Posterior cingulate gyrus (tissue), 11 donors: ENCODE measurements at regions of chr14 and their contacts with region 1.

Region 1: GRCh38 chr14:36941783-36942521 is 230.5 kb downstream of the SLC25A21 start:
- DNase-seq: peak; percentile 41 to 95 (median 76)

Region 2: DNA sequence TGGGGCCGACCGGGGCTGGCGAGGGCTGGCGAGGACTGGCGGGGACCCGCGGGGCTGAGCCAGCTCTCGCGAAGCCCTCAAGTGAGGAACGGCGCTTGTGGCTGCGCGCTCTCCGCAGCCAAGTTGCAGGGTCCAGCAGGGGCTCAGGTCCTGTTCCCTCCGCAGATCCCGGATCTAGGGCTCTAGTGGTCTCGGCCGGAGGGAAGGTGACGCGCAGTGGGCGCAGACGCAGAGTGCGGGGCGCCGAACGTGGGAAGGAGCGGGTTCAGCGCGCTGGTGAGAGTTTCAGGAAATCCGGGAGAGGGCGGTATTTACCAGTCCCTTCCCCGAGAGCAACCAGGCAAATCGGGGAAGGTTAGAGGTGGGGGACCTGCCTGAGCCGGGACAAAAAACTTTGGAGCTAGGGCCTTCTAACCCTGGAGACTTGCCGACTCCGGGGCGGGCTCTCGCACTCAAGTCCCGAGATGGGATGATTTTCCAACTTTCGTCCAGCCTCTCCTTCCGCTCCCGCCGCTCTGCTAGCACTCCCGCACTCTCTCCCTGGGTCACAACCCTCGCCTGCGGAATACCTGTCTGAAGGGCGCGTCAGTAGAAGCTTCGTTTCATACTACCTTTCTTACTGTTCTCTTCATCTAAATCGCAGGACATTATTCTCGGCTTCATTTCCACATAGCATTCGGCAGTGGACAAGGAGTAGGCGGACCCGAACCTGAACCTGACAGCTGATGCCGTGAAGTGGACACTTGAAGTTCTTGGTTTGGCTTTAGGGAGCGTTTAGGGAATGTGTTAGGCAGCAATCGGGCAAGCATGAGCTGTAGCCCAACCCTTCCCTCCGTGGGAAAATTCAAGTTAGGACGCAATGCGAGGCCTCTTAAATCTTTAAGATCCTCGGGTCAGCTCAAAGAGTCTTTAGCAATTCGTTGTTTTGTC is 293.9 kb before region 1 on chr14:
- intact Hi-C with region 1: loop called (anchors 10 kb)
- DNase-seq: no peak